Activated CD4-positive, alpha-beta memory T cell treated with anti-CD3 and anti-CD28 coated beads for 36 hours (primary cell): ENCODE measurements at regions of chr2 and their contacts with region 1.

Region 1: DNA sequence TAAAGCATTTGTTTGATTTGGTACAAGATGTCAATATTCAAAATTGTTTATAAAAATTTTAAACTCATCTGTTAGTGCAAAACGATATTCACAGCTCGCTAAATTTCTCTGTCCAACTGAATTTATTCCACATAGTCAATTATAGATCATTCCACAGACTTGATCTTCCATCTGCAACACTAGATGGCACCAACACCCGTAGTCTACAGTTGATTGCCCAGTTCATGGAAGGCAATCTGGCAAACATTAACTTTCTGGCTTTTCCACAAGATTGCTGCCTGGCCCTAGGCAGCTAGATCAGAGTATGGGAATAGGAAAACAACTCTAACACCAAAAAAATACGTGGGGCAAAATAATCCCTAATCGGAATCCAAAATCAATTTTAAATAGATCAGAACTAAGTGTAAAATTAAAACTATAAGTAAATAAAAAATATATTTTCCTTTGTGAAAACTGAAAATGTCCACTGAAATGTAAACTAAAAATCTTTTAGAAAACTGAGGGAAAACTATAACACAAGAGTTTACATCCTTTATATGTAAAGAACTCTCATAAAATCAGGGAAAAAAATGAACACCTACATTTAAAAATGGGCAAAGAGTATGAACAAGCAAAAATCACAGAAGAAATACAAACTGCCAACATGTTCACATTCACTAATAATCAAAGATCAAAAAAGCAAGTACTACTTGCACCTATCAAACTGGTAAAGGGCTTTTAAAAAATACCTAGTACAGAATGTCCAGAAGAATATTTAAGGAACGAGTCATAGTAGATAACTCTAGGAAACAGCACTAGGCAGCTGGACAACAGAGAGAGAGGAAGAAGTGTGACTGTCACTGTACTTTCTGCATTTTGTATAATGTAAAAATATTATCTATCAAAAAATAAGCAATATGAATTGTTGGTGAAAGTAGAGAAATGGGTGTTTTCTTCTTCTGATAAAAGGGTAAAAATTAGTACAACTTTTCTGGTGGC is 35.0 kb downstream of the RTN4 start:
- DNase-seq: peak; percentile 44
- H3K4me3 Mint-ChIP-seq: no peak overlapping the region
- H3K27ac Mint-ChIP-seq: no peak overlapping the region
- H3K4me1 Mint-ChIP-seq: peaks cover 40% of the 10 kb centered on the region
- H3K27me3 Mint-ChIP-seq: no peaks in the 10 kb centered on the region

Region 2: GRCh38 chr2:54999182-54999581 is 16.1 kb before region 1 on chr2:
- CTCF ChIA-PET with region 1: interaction called, 5 read pairs
- POLR2A ChIA-PET with region 1: no interaction called
- intact Hi-C with region 1: loop called (anchors 2 kb)
- DNase-seq: no peak
- H3K4me3 Mint-ChIP-seq: no peak overlapping the region
- H3K27ac Mint-ChIP-seq: no peak overlapping the region
- H3K4me1 Mint-ChIP-seq: peaks cover 67% of the 10 kb centered on the region
- H3K27me3 Mint-ChIP-seq: no peaks in the 10 kb centered on the region

Region 3: DNA sequence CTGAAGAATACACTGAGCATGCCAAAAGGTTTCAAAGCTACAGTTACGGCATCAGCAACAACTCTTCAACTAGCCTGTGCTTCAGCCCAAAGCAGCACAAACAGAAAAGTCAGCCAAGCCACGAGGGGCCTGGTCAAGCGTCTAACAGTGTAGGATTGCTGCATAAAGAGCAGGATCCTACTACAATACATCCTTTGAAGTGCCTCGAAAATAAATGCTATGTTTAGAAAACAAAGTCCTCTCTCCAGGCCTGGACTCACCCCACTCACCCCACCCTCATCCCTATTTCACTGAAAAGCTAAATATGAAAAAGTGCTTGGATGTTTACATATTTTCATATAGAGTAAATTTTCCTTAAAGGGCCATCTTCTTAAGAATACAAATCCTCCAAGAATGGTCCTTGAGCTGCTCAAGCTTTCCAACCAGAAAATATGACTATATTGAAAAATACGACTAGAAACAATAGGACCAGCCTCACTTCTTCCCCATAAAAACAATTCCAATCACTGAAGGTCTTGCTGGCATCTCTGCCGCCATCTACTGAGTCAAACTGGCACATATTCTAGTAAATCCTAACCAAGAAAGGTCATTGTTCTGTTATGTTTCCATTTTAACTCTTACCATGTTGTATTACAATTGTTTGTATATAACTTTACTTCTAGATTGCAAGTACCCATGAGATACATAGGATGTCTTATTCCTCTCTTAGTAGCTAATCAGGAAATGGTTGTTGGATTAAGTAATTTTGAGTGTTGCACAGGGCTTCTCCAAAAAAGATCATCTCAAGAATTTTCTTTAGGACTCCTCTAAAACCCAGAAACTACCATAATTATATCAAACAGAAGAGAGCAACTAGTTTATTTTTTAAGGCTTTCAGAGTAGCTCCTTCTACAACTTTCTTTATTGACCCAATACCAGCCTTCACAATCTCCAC is 153.2 kb after region 1 on chr2:
- CTCF ChIA-PET with region 1: interaction called, 79 read pairs
- POLR2A ChIA-PET with region 1: no interaction called
- intact Hi-C with region 1: loop called (anchors 1 kb)
- DNase-seq: peak; percentile 45
- H3K4me3 Mint-ChIP-seq: no peak overlapping the region
- H3K27ac Mint-ChIP-seq: no peak overlapping the region
- H3K4me1 Mint-ChIP-seq: peaks cover 3% of the 10 kb centered on the region
- H3K27me3 Mint-ChIP-seq: no peaks in the 10 kb centered on the region